Activated CD8-positive, alpha-beta T cell treated with anti-CD3 and anti-CD28 coated beads for 36 hours (primary cell): ENCODE measurements at regions of chr16 and their contacts with region 1.

Region 1: DNA sequence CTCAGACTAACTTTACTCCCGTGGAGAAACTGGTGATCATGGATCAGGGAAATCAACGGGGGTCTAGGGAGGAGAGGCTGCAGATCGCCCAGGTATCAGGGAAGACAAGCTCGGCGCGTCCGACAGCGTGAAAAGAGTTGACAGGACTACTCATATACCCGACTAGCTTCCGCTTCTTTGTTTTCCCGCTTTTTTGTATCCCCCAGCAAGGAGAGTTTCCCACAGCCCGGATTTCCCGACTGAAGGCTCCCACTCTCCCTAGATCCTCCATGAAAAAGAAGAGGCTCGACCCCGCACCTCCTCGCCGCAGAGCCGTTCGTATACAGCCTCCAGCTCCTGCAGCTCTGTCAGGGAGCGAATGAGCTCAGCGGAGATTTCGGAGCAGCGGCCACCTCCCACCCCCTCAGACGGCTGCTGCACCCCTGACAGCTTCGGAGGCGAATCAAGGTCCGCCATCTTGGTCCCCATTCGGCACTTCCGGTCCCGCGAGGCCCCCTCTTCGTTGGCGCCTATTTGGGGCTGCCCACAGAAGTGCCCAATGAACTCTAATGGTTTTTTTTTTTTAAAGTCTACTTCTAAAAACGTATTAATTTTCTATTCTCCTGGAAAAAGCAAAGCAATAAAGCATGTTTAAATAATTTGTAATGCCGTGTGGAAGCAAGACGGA is at the start of gene COG4:
- DNase-seq: peak; percentile 96
- ATAC-seq: peak; percentile 89
- H3K4me3 Mint-ChIP-seq: peak within 1 kb of the TSS; percentile 88
- H3K27ac Mint-ChIP-seq: peak within 1 kb of the TSS; percentile 98
- H3K4me1 Mint-ChIP-seq: peaks cover 44% of the 10 kb centered on the region
- H3K27me3 Mint-ChIP-seq: no peaks in the 10 kb centered on the region
- CTCF ChIP-seq: no peak
- total RNA-seq, gene COG4: 38.0 to 39.0 TPM

Region 2: GRCh38 chr16:70508752-70509151 is 14.5 kb before region 1 on chr16:
- CTCF ChIA-PET with region 1: interaction called, 13 read pairs
- POLR2A ChIA-PET with region 1: interaction called, 7 read pairs
- intact Hi-C with region 1: no loop called
- DNase-seq: no peak
- ATAC-seq: peak; percentile 42
- H3K4me3 Mint-ChIP-seq: no peak overlapping the region
- H3K27ac Mint-ChIP-seq: peak overlapping the region; percentile 73
- H3K4me1 Mint-ChIP-seq: peaks cover 7% of the 10 kb centered on the region
- H3K27me3 Mint-ChIP-seq: no peaks in the 10 kb centered on the region
- CTCF ChIP-seq: no peak

Region 3: DNA sequence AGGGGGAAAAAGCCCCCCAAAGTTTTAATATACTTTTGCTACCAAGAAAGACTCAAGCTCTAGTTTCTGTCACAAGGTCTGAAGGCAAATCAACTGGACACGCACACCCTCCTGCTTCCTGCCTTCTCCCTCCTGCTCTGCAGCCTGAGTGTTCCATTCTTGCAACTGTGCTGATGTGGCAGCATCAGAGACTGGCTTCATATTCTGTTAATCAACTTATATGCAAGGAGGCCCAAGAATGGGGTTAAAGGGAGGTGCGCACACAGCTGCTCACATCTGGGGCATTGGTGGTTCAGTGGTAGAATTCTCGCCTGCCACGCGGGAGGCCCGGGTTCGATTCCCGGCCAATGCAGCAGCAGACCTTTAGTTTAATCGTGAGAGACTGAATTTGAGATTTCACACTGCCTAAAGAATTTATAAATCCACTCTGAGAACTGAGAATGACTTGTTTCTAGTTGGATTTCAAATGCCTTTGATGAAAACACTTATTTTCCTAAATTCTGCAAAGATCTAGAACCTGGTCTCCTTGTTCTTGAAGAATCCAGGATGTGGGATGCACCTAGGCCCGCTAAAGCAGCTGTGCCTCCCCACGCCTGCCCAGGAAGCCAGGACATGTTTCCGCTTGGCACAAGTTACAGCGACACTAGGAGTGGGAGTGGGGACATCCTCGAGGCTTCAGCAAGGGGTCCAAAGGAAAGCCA is 266.2 kb after region 1 on chr16:
- CTCF ChIA-PET with region 1: no interaction called
- POLR2A ChIA-PET with region 1: no interaction called
- intact Hi-C with region 1: no loop called
- DNase-seq: no peak
- ATAC-seq: no peak
- H3K4me3 Mint-ChIP-seq: no peak overlapping the region
- H3K27ac Mint-ChIP-seq: no peak overlapping the region
- H3K4me1 Mint-ChIP-seq: peaks cover 6% of the 10 kb centered on the region
- H3K27me3 Mint-ChIP-seq: no peaks in the 10 kb centered on the region
- CTCF ChIP-seq: no peak